Thyroid gland (tissue), 4 donors: ENCODE measurements at regions of chr17 and their contacts with region 1.

Region 1: DNA sequence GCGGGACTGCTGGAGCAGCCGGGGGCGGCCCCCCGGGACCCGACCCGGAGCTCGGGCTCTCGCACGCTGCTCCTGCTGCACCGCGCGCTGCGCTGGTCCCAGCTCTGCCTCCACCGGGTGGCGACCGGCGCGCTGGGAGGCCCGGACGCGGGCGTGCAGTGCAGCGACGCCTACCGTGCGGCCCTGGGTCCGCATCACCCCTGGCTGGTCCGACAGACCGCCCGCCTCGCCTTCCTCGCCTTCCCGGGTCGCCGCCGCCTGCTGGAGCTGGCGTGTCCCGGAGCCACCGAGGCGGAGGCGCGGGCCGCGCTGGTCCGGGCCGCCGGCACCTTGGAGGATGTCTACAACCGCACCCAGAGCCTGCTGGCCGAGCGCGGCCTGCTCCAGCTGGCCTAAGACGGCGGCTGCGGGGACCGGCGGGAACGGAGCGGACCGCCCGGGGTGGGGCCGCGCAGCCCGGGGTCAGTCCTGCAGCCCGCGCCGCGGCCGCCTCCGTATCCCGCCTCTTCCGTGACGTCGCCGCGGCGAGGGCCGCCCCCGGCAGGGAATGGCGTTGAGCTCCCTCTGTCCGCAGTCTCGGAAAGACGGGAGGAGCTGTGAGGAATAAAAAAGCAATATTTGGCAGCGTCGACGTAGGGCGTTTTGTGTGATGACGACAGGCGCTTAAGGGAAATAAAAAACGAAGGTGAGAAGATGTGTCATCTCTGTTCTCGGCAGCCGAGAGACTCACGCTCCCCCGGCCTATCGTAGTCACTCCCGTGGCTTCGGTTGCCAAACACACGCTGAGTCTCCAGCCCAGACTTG is 1.3 kb downstream of the GLTPD2 start:
- DNase-seq: peak; percentile 79 to 80
- H3K4me3 ChIP-seq: peak overlapping the region; percentile 40 to 63 (median 59)
- H3K27ac ChIP-seq: peak overlapping the region; percentile 83 to 95 (median 85)
- H3K4me1 ChIP-seq: peaks cover 15 to 30% of the 10 kb centered on the region in 2 donors
- H3K27me3 ChIP-seq: peaks cover 3% of the 10 kb centered on the region
- CTCF ChIP-seq: peak; percentile 24 to 85 (median 66)
- POLR2A ChIP-seq: peak in 1 of 2 donors; percentile 85

Region 2: DNA sequence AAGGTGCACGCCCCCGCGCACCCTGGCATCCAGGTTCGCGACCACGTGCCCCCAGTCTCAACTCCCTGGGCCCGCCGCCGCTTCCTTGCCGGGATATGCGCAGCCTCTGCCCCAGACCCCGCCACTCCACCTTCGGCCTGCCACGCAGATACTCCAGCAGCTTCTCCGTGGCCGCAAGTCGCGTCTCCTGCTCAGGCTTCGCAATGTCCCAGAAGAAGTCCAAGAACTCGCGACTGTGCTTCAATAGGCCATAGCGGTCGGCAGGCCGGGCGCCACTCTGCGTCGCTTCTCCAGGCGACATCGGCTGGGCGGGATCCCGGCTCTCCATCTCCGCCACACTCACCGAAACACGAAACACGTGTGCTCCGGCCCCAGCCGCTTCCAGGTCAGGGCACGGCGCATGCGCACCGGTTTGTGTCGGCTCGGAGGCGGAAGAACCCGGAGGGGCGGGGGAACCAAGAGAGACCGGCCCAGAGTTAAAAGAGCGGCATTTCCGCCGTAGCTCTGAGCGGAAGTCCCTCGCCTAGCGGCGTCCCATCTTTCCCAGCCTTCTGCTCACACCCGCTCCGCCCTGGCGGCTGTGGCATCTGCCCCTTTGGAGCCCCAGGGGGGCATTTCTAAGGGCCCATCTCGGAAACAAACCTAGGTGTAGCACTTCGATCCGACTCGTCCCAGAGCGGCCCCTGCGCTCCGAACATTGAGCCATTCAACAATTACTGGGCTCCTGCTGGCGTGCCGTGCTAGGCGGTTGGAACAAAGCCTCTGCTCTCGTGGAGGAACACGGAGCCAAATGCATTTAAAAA is 234.9 kb before region 1 on chr17 and contains the start of gene MYBBP1A:
- intact Hi-C with region 1: no loop called
- DNase-seq: peak; percentile 98
- H3K4me3 ChIP-seq: peak within 1 kb of the TSS; percentile 50 to 82 (median 75)
- H3K27ac ChIP-seq: peak within 1 kb of the TSS; percentile 43 to 80 (median 59)
- H3K4me1 ChIP-seq: peaks cover 15 to 17% of the 10 kb centered on the region in 2 donors
- H3K27me3 ChIP-seq: no peaks in the 10 kb centered on the region
- CTCF ChIP-seq: peak in 3 of 6 experiments; percentile 20 to 45 (median 23)
- POLR2A ChIP-seq: peak in 1 of 2 donors; percentile 71
- total RNA-seq, gene MYBBP1A: 23.5 to 50.2 (median 37.6) TPM

Region 3: GRCh38 chr17:4739122-4740024 is 50.7 kb before region 1 on chr17 and contains the starts of genes CXCL16 and ZMYND15:
- intact Hi-C with region 1: loop called (anchors 5 kb)
- DNase-seq: peak; percentile 65 to 69
- H3K4me3 ChIP-seq: peak within 1 kb of the TSS; percentile 50 to 83 (median 74)
- H3K27ac ChIP-seq: peak within 1 kb of the TSS in 2 of 3 donors; percentile 34 to 42
- H3K4me1 ChIP-seq: peaks cover 8 to 9% of the 10 kb centered on the region in 2 donors
- H3K27me3 ChIP-seq: no peaks in the 10 kb centered on the region
- CTCF ChIP-seq: no peak
- POLR2A ChIP-seq: peak in 1 of 2 donors; percentile 32
- total RNA-seq, gene CXCL16: 6.6 to 13.7 (median 12.8) TPM
- total RNA-seq, gene ZMYND15: 0.29 to 0.44 (median 0.37) TPM

Region 4: GRCh38 chr17:4845118-4845517 is 55.0 kb after region 1 on chr17:
- intact Hi-C with region 1: no loop called
- DNase-seq: no peak
- H3K4me3 ChIP-seq: no peak overlapping the region
- H3K27ac ChIP-seq: no peak overlapping the region
- H3K4me1 ChIP-seq: peaks cover 0 to 19% of the 10 kb centered on the region in 2 donors
- H3K27me3 ChIP-seq: no peaks in the 10 kb centered on the region
- CTCF ChIP-seq: no peak
- POLR2A ChIP-seq: no peak